GM12878 (cell line): ENCODE measurements at regions of chr11 and their contacts with region 1.

Region 1: DNA sequence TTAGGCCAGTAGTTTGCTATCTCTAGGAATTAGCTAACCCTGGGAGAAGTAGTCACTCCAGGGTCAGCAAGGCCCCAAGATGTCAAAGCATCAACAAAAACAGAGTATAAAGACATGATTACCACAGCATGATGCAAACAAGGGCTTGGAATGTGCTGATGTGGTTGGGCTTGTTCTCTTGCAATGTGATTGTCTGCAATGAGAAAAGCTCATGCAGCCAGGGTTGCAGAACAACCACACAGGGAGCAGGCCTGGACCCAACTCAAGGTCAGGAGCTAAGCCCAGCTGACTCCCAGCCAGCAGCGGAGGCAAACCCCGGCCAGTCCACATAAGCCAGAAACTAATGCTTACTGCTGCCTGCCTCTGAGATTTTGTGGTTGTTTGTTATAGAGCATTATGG is 132.4 kb upstream of the ZC3H12C start:
- DNase-seq: no peak
- ATAC-seq: no peak
- H3K4me3 ChIP-seq: no peak overlapping the region
- H3K27ac ChIP-seq: no peak overlapping the region
- H3K4me1 ChIP-seq: peaks cover 15% of the 10 kb centered on the region
- H3K27me3 ChIP-seq: no peaks in the 10 kb centered on the region
- CTCF ChIP-seq: no peak
- EP300 ChIP-seq: no peak
- POLR2A ChIP-seq: no peak
- RAD21 ChIP-seq: no peak

Region 2: DNA sequence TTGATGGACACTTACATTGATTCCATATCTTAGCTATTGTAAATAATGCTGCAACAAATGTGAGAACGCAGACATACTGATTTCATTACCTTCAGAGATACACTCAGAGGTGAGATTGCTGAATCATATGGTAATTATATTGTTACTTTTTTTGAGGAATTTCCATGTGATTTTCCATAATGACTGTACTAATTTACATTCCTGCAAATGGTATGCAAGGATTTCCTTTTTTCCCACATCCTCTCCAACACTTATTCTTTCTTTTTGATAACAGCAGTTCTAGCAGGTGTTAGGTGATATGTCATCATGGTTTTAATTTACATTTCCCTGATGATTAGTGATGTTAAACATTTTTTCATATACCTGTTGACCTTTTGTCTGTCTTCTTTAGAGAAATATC is 331.1 kb before region 1 on chr11:
- CTCF ChIA-PET with region 1: no interaction called
- POLR2A ChIA-PET with region 1: no interaction called
- RAD21 ChIA-PET with region 1: no interaction called
- SMC1A ChIA-PET with region 1: no interaction called
- in situ Hi-C with region 1: no loop called
- intact Hi-C with region 1: no loop called
- DNase-seq: no peak
- ATAC-seq: no peak
- H3K4me3 ChIP-seq: no peak overlapping the region
- H3K27ac ChIP-seq: no peak overlapping the region
- H3K4me1 ChIP-seq: no peaks in the 10 kb centered on the region
- H3K27me3 ChIP-seq: no peaks in the 10 kb centered on the region
- CTCF ChIP-seq: no peak
- EP300 ChIP-seq: no peak
- POLR2A ChIP-seq: no peak
- RAD21 ChIP-seq: no peak

Region 3: GRCh38 chr11:109984634-109985289 is 23.9 kb after region 1 on chr11:
- CTCF ChIA-PET with region 1: interaction called, 4 read pairs
- POLR2A ChIA-PET with region 1: interaction called, 7 read pairs
- RAD21 ChIA-PET with region 1: interaction called, 5 read pairs
- SMC1A ChIA-PET with region 1: interaction called, 11 read pairs
- in situ Hi-C with region 1: no loop called
- intact Hi-C with region 1: no loop called
- DNase-seq: peak; percentile 67
- ATAC-seq: peak; percentile 94
- H3K4me3 ChIP-seq: peak overlapping the region; percentile 30
- H3K27ac ChIP-seq: peak overlapping the region; percentile 89
- H3K4me1 ChIP-seq: peaks cover 19% of the 10 kb centered on the region
- H3K27me3 ChIP-seq: no peaks in the 10 kb centered on the region; a peak in 1 of 4 replicates
- CTCF ChIP-seq: no peak
- EP300 ChIP-seq: peak; percentile 94 to 95
- POLR2A ChIP-seq: no peak
- RAD21 ChIP-seq: no peak

Region 4: GRCh38 chr11:110077831-110078325 is 117.0 kb after region 1 on chr11:
- CTCF ChIA-PET with region 1: interaction called, 10 read pairs
- POLR2A ChIA-PET with region 1: interaction called, 3 read pairs
- RAD21 ChIA-PET with region 1: interaction called, 16 read pairs
- SMC1A ChIA-PET with region 1: interaction called, 14 read pairs
- in situ Hi-C with region 1: no loop called
- intact Hi-C with region 1: no loop called
- DNase-seq: peak; percentile 86
- ATAC-seq: peak; percentile 88
- H3K4me3 ChIP-seq: no peak overlapping the region
- H3K27ac ChIP-seq: peak overlapping the region; percentile 51
- H3K4me1 ChIP-seq: peaks cover 16% of the 10 kb centered on the region
- H3K27me3 ChIP-seq: no peaks in the 10 kb centered on the region
- CTCF ChIP-seq: no peak
- EP300 ChIP-seq: peak; percentile 84 to 91
- POLR2A ChIP-seq: no peak
- RAD21 ChIP-seq: no peak; the same call in 1 of the 2 replicates

Region 5: GRCh38 chr11:110092515-110093404 is 131.9 kb after region 1 on chr11 and contains the start of gene ZC3H12C:
- CTCF ChIA-PET with region 1: interaction called, 3 read pairs
- POLR2A ChIA-PET with region 1: interaction called, 10 read pairs
- RAD21 ChIA-PET with region 1: interaction called, 14 read pairs
- SMC1A ChIA-PET with region 1: interaction called, 16 read pairs
- in situ Hi-C with region 1: no loop called
- intact Hi-C with region 1: no loop called
- DNase-seq: no peak
- ATAC-seq: peak; percentile 60
- H3K4me3 ChIP-seq: peak within 1 kb of the TSS; percentile 72
- H3K27ac ChIP-seq: peak within 1 kb of the TSS; percentile 75
- H3K4me1 ChIP-seq: peaks cover 21% of the 10 kb centered on the region
- H3K27me3 ChIP-seq: no peaks in the 10 kb centered on the region
- CTCF ChIP-seq: peak; percentile 19 to 44 (median 40); a peak in 5 of 6 replicates
- EP300 ChIP-seq: peak; percentile 58 to 63; a peak in 2 of 4 replicates
- POLR2A ChIP-seq: peak; percentile 80
- RAD21 ChIP-seq: peak; percentile 49
- polyA plus RNA-seq, gene ZC3H12C: 0.31 to 0.68 TPM

Region 6: GRCh38 chr11:111378861-111379601 is 1418.2 kb after region 1 on chr11 and contains the start of gene POU2AF1:
- CTCF ChIA-PET with region 1: no interaction called
- POLR2A ChIA-PET with region 1: no interaction called
- RAD21 ChIA-PET with region 1: no interaction called
- SMC1A ChIA-PET with region 1: no interaction called
- in situ Hi-C with region 1: loop called (anchors 10 kb)
- intact Hi-C with region 1: no loop called
- DNase-seq: peak; percentile 82
- ATAC-seq: peak; percentile 76
- H3K4me3 ChIP-seq: peak within 1 kb of the TSS; percentile 69
- H3K27ac ChIP-seq: peak within 1 kb of the TSS; percentile 97
- H3K4me1 ChIP-seq: peaks cover 17% of the 10 kb centered on the region
- H3K27me3 ChIP-seq: no peaks in the 10 kb centered on the region
- CTCF ChIP-seq: no peak
- EP300 ChIP-seq: no peak; a peak in 1 of 4 replicates
- POLR2A ChIP-seq: peak; percentile 96
- RAD21 ChIP-seq: no peak
- polyA plus RNA-seq, gene POU2AF1: 13.1 to 92.7 TPM